Heart left ventricle (tissue), 16 donors: ENCODE measurements at regions of chr6 and their contacts with region 1.

Region 1: DNA sequence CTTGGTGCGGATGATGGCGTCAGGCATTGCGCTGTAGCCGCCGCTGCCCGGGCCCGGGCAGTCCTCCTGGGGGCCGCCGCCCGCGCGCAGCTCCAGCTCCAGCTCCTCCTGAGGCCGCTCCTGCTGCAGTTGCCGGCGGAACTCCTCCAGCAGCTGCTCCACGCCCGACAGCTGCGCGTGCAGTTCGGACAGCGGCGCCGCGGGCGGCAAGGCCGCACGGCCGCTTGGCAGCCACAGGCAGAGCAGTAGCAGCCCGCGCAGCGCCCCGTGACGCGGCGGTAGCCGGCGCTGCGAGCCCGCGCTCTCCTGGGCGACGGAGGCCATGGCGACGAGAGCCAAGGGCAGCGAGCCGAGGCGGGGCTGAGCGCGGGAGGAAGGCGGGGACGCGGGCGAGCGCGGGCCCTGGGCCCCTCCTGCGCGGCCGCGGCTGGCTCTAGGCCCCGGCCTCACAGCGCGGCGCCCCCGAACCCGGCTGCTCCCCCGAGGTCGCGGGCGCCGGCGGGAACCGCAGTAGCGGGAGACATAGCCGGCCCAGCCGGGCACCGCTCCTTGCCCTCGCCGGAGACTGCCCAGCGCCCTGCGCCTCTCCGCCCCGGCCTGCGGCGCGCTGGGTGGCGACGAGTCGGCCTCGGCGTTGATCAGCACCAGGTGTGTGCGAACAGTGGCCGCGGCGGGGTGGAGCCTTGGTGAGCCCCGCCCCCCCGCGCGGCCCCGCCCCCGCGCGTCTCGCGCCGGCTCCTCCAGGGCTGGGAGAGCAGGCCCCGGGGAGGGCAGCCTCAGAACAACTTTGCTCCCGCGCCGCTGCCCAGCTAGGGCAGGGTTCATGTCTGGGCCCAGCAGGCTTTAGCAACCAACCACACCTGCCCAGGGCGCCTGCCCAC is at the start of gene LRP11:
- DNase-seq: peak; percentile 79 to 92 (median 85)
- ATAC-seq: peak; percentile 89 to 95 (median 94)
- H3K4me3 ChIP-seq: peak within 1 kb of the TSS; percentile 61 to 88 (median 72)
- H3K27ac ChIP-seq: peak within 1 kb of the TSS; percentile 57 to 94 (median 88)
- H3K4me1 ChIP-seq: peaks cover 0 to 36% (median 14%) of the 10 kb centered on the region in 12 donors
- H3K27me3 ChIP-seq: no peaks in the 10 kb centered on the region
- CTCF ChIP-seq: peak in 1 of 12 donors; percentile 19
- POLR2A ChIP-seq: peak in 1 of 2 donors; percentile 65
- total RNA-seq, gene LRP11: 10.2 to 23.8 (median 13.2) TPM

Region 2: GRCh38 chr6:149565527-149566409 is 298.2 kb before region 1 on chr6 and contains the start of gene GINM1:
- intact Hi-C with region 1: loop called in 1 of 10 experiments (anchors 10 kb)
- DNase-seq: peak; percentile 93 to 98 (median 94)
- ATAC-seq: peak; percentile 95 to 98 (median 96)
- H3K4me3 ChIP-seq: peak within 1 kb of the TSS; percentile 60 to 100 (median 90)
- H3K27ac ChIP-seq: peak within 1 kb of the TSS; percentile 72 to 97 (median 92)
- H3K4me1 ChIP-seq: peaks cover 0 to 25% (median 9%) of the 10 kb centered on the region in 12 donors
- H3K27me3 ChIP-seq: no peaks in the 10 kb centered on the region
- CTCF ChIP-seq: peak; percentile 46 to 85 (median 58)
- POLR2A ChIP-seq: no peak
- total RNA-seq, gene GINM1: 42.4 to 60.5 (median 52.7) TPM

Region 3: GRCh38 chr6:149717588-149718458 is 146.1 kb before region 1 on chr6 and contains the start of gene LATS1:
- intact Hi-C with region 1: loop called in 1 of 10 experiments (anchors 10 kb)
- DNase-seq: peak; percentile 91 to 95 (median 95)
- ATAC-seq: peak; percentile 92 to 96 (median 94)
- H3K4me3 ChIP-seq: peak within 1 kb of the TSS; percentile 59 to 98 (median 81)
- H3K27ac ChIP-seq: peak within 1 kb of the TSS; percentile 94 to 100 (median 98)
- H3K4me1 ChIP-seq: peaks cover 3 to 39% (median 26%) of the 10 kb centered on the region in 12 donors
- H3K27me3 ChIP-seq: no peaks in the 10 kb centered on the region
- CTCF ChIP-seq: no peak
- POLR2A ChIP-seq: peak in 1 of 2 donors; percentile 73
- total RNA-seq, gene LATS1: 9.4 to 18.5 (median 10.9) TPM

Region 4: DNA sequence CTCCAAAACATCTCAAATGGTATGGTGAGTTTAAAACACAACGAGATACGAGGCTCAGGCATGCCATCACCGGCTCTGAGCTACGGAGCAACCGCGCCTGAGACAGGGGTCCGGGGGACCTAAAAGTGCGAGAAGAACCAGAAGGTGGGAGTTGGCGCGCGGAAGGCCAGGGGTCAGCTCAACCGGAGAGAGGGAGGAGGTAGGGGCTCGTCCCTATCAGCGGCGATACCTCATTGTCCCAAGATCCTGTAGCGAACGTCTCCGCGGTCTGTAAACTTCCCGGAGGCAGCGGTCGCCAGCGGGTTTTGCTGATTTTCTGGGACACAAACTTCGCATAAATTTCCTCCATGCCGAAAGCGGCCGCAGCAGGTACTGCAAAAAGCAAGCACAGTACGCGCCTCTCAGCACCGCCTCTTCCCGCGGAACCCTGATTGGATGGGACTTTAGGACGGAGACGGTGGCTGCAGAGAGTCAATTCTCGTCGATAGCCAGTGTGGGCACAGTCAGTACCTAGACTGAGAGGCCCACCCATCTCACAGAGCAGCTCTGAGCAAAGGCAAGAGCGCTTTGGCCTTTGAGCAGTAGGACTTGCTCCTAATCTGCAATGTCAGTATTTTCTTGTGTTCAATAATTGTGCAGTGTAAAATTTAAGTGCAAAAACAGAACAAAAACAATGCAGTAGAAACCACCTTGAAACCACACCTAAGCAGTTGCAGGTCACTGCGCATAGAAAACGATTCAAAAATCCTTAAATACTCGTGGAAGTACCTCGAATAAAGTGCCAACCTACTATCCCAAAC is 117.6 kb before region 1 on chr6 and contains the start of gene NUP43:
- intact Hi-C with region 1: loop called in 1 of 10 experiments (anchors 10 kb)
- DNase-seq: peak; percentile 94 to 97 (median 95)
- ATAC-seq: peak; percentile 74 to 85 (median 82)
- H3K4me3 ChIP-seq: peak within 1 kb of the TSS; percentile 49 to 91 (median 74)
- H3K27ac ChIP-seq: peak within 1 kb of the TSS; percentile 13 to 83 (median 72)
- H3K4me1 ChIP-seq: peaks cover 0 to 32% (median 25%) of the 10 kb centered on the region in 12 donors
- H3K27me3 ChIP-seq: no peaks in the 10 kb centered on the region
- CTCF ChIP-seq: peak in 11 of 12 donors; percentile 39 to 72 (median 50)
- POLR2A ChIP-seq: peak in 1 of 2 donors; percentile 36
- total RNA-seq, gene NUP43: 14.5 to 32.9 (median 27.2) TPM

Region 5: DNA sequence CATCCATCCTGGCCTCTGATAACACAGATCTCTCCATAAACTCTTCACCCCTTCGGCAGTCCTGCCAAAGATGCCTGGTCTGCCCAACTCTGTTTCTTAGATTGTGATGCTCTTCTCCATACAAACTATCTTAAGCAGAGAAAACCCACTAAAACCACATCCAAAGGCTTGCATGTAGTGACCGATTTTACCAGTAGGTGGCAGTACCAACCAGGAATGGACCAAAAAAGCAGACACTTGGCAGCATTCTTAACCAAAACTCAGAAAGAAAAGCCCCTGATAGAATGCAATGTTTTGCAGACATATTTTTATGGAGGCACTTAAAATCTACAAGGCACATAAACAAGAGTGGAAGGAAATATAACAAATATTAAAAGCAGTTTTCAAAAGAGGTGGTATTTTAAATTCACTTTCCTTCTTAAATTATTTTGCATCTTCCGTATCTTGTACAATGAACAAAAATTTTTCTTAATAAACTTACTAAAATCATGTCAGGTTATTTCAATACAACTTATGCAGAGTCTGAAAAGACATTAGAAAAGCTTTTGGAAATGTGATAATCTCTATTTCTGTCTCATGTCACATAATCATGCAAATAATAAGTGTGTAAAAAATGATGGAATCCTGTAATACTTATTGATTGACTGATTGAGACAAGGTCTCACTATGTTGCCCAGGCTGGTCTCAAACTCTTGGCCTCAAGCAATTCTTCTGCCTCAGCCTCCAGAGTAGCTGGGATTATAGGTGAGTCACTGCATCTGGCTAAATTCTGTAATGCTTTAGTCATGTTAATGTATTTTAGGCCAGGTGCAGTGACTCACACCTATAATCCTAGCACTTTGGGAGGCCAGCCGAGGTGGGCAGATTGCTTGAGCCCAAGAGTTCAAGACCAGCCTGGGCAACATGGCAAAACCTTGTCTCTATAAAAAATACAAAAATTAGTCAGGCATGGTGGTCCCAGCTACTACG is 29.1 kb before region 1 on chr6:
- intact Hi-C with region 1: loop called in 8 of 10 experiments (anchors 2 to 5 kb)
- DNase-seq: peak in 2 of 5 donors; percentile 36 to 50
- ATAC-seq: peak in 2 of 4 donors; percentile 42 to 62
- H3K4me3 ChIP-seq: no peak overlapping the region
- H3K27ac ChIP-seq: no peak overlapping the region
- H3K4me1 ChIP-seq: no peaks in the 10 kb centered on the region
- H3K27me3 ChIP-seq: no peaks in the 10 kb centered on the region
- CTCF ChIP-seq: peak; percentile 85 to 96 (median 93)
- POLR2A ChIP-seq: no peak

Region 6: GRCh38 chr6:149846321-149846720 is 17.6 kb before region 1 on chr6:
- intact Hi-C with region 1: loop called in 1 of 10 experiments (anchors 2 kb)
- DNase-seq: no peak
- ATAC-seq: peak in 2 of 4 donors; percentile 18 to 20
- H3K4me3 ChIP-seq: no peak overlapping the region
- H3K27ac ChIP-seq: no peak overlapping the region
- H3K4me1 ChIP-seq: peaks cover 0 to 18% (median 12%) of the 10 kb centered on the region in 12 donors
- H3K27me3 ChIP-seq: no peaks in the 10 kb centered on the region
- CTCF ChIP-seq: no peak
- POLR2A ChIP-seq: no peak